ENCODE measurements at regions of chr7 and their contacts with region 1.

Region 1: GRCh38 chr7:104848138-104848990 is 165.6 kb upstream of the KMT2E start:
- DNase-seq: peak; percentile 41 to 94
- H3K4me3 ChIP-seq: no peak overlapping the region
- H3K27ac ChIP-seq: no peak overlapping the region
- H3K4me1 ChIP-seq: peaks cover 0 to 3% (median 0%) of the 10 kb centered on the region in 4 experiments; a peak in 1 of 7 replicates
- H3K27me3 ChIP-seq: no peaks in the 10 kb centered on the region
- CTCF ChIP-seq: peak; percentile 29 to 91 (median 86)
- EP300 ChIP-seq: no peak
- POLR2A ChIP-seq: no peak
- RAD21 ChIP-seq: peak; percentile 95 to 96

Region 2: DNA sequence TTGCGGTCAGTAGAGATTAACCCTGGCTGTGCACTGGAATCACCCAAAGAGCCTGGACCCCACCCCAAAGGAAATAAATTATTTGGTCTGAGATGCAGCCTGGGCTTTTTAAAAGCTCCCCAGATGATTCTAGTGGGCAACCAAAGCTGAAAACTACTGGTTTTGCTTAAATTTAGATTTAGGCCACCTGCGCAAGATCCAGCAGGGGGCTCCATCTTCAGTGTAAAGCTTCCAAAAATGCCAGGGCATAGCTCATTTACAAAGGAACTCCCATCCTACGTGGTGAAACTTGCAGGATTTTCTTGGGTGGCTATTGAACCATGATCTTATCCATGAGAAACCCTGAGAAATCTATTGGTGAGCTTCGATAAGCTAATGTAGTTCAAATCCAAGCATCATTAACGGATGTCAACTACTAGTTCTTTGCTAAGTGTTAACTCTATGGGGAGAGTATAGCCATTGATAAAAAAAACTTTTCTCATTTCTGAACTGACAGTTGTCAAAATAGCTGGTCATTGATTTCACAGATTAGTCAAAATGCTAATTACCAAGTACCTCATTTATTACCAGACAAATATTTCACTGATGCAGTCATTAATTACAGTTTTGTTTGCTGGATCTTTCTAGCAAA is 204.7 kb before region 1 on chr7:
- CTCF ChIA-PET with region 1: interaction called, 94 read pairs
- POLR2A ChIA-PET with region 1: no interaction called
- DNase-seq: peak; percentile 7 to 48
- H3K4me3 ChIP-seq: no peak overlapping the region
- H3K27ac ChIP-seq: no peak overlapping the region
- H3K4me1 ChIP-seq: no peaks in the 10 kb centered on the region
- H3K27me3 ChIP-seq: no peaks in the 10 kb centered on the region
- CTCF ChIP-seq: peak; percentile 19 to 73 (median 63)
- EP300 ChIP-seq: no peak
- POLR2A ChIP-seq: no peak
- RAD21 ChIP-seq: peak; percentile 69 to 79

Region 3: GRCh38 chr7:104656467-104656866 is 191.9 kb before region 1 on chr7:
- CTCF ChIA-PET with region 1: interaction called, 20 read pairs
- POLR2A ChIA-PET with region 1: no interaction called
- DNase-seq: no peak
- H3K4me3 ChIP-seq: no peak overlapping the region
- H3K27ac ChIP-seq: no peak overlapping the region
- H3K4me1 ChIP-seq: no peaks in the 10 kb centered on the region
- H3K27me3 ChIP-seq: no peaks in the 10 kb centered on the region
- CTCF ChIP-seq: no peak
- EP300 ChIP-seq: no peak
- POLR2A ChIP-seq: no peak
- RAD21 ChIP-seq: no peak

Region 4: GRCh38 chr7:104814631-104815400 is 33.5 kb before region 1 on chr7:
- CTCF ChIA-PET with region 1: interaction called, 19 read pairs
- POLR2A ChIA-PET with region 1: no interaction called
- DNase-seq: no peak
- H3K4me3 ChIP-seq: no peak overlapping the region
- H3K27ac ChIP-seq: no peak overlapping the region
- H3K4me1 ChIP-seq: peaks cover 0 to 4% (median 1%) of the 10 kb centered on the region in 4 experiments; a peak in 1 of 7 replicates
- H3K27me3 ChIP-seq: no peaks in the 10 kb centered on the region
- CTCF ChIP-seq: no peak
- EP300 ChIP-seq: no peak
- POLR2A ChIP-seq: no peak
- RAD21 ChIP-seq: no peak

Region 5: DNA sequence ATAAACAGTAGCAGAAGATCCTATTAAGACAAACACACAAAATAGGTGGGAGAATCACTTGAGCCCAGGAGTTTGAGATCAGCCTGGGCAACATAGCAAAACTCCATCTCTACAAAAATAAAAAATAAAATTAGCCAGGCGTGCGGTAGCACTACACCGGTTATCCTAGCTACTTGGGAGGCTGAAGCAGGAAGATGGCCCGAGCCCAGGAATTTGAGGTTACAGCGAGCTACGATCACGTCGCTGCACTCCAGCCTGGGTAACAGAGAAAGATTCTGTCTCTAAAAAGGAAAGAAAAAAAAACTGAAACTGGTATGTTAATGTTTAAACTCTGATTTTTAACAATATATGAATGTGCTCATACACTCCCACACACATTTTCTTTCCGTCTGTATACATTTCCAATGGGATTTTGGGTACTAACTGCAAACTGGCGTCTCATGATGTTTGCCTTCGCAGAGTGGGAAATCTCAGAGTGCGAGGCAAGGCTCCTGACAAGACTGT is 25.0 kb after region 1 on chr7:
- CTCF ChIA-PET with region 1: interaction called, 15 read pairs
- POLR2A ChIA-PET with region 1: no interaction called
- DNase-seq: no peak
- H3K4me3 ChIP-seq: no peak overlapping the region
- H3K27ac ChIP-seq: no peak overlapping the region
- H3K4me1 ChIP-seq: no peaks in the 10 kb centered on the region
- H3K27me3 ChIP-seq: no peaks in the 10 kb centered on the region
- CTCF ChIP-seq: no peak
- EP300 ChIP-seq: no peak
- POLR2A ChIP-seq: no peak
- RAD21 ChIP-seq: no peak

Measured in H1 (cell line).